Naive thymus-derived CD4-positive, alpha-beta T cell (primary cell): ENCODE measurements at regions of chr22 and their contacts with region 1.

Region 1: DNA sequence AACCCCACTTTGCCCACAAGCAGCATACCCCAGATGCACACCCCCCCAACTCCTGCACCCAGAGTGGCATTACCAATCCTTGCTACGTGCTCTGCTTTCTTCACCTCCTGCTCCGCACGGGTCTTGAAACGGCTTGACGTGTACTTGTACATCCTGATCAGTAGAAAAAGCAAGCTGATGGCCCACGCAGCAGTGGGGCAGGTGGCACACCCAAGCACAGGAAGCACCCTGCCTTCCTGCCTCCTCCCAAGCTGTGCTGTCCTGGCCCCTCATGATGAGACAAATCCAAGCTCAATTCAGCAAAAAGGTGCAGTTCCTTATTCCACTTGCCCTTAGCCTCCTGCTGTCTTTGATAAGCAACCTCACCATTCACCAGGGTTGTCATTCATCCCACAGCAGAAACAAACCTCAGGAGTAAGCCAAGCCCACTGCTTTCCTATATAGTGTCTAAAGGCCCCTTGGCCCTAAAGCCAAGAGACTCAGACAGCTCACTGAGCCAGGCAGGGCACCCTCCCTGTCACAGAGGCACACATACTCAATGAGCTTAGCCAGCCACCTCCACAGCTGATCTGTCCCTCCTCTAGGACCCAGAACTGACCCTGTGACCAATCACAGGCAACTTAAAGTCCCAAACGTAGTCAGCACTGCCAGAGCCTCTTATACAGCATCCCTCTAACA is 27.8 kb downstream of the MORC2 start:
- DNase-seq: peak in 7 of 9 donors; percentile 52 to 72 (median 64)
- ATAC-seq: peak; percentile 74
- H3K4me3 ChIP-seq: peak overlapping the region; percentile 67
- H3K4me3 Mint-ChIP-seq: peak overlapping the region; percentile 81 to 95 (median 88)
- H3K27ac ChIP-seq: peak overlapping the region; percentile 78
- H3K27ac Mint-ChIP-seq: peak overlapping the region; percentile 85 to 97 (median 94)
- H3K4me1 ChIP-seq: peaks cover 43 to 93% of the 10 kb centered on the region in 2 donors
- H3K4me1 Mint-ChIP-seq: peaks cover 53 to 97% (median 93%) of the 10 kb centered on the region in 7 donors
- H3K27me3 ChIP-seq: no peaks in the 10 kb centered on the region
- H3K27me3 Mint-ChIP-seq: no peaks in the 10 kb centered on the region

Region 2: DNA sequence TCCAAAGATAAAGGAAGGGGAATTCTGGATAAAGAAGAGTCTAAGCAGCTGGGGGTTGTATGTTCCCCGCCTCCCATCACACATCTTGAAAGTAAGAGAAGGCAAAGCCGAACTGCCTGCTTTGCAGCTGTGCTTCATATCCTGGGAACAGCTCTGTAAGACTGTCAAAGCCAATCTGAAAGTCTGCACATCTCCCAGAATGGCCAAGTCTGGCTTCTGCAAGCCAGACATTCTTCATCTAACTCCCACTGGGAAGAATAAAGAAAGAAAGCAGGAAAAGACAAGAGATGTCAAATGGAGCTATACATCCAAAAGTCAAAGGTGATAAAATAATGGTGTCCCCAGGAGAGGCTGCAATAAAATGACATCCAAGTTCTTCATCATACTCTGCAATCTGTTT is 12.4 kb after region 1 on chr22:
- CTCF ChIA-PET with region 1: interaction called, 16 read pairs
- POLR2A ChIA-PET with region 1: interaction called, 11 read pairs
- intact Hi-C with region 1: loop called in 1 of 2 experiments (anchors 1 kb)
- DNase-seq: no peak
- ATAC-seq: no peak
- H3K4me3 ChIP-seq: no peak overlapping the region
- H3K4me3 Mint-ChIP-seq: peak overlapping the region in 3 of 10 donors; percentile 13 to 49 (median 42)
- H3K27ac ChIP-seq: no peak overlapping the region
- H3K27ac Mint-ChIP-seq: peak overlapping the region in 7 of 9 donors; percentile 21 to 98 (median 76)
- H3K4me1 ChIP-seq: peaks cover 0 to 75% of the 10 kb centered on the region in 2 donors
- H3K4me1 Mint-ChIP-seq: peaks cover 40 to 83% (median 75%) of the 10 kb centered on the region in 7 donors
- H3K27me3 ChIP-seq: no peaks in the 10 kb centered on the region
- H3K27me3 Mint-ChIP-seq: no peaks in the 10 kb centered on the region